Activated B cell treated with CpG ODN at 0.5 μM for 24 hours (primary cell): ENCODE measurements at regions of chr3 and their contacts with region 1.

Region 1: DNA sequence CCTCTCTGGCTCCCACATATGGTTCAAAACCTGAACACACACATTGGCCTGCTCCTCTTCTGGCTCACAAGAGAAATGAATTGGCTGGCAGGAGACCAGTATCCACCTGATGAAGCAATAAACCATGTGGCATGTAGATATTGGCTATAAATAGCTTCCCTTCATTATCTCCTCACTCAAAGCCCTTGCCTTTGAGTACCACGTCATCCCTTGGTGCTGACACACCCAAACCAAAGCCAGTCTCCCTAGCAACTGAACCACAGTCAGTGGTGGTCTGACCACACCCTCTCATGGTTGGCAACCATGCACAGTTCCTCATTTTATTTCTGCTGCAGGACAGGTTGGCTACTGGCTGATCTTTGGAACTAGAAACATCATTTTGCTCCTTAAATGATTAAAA is 98.8 kb downstream of the ZNF621 start:
- DNase-seq: peak; percentile 65
- ATAC-seq: peak; percentile 92
- H3K4me3 Mint-ChIP-seq: no peak overlapping the region
- H3K27ac Mint-ChIP-seq: no peak overlapping the region
- H3K4me1 Mint-ChIP-seq: peaks cover 13% of the 10 kb centered on the region
- H3K27me3 Mint-ChIP-seq: no peaks in the 10 kb centered on the region
- CTCF ChIP-seq: no peak

Region 2: GRCh38 chr3:40452876-40453730 is 170.5 kb before region 1 on chr3:
- CTCF ChIA-PET with region 1: no interaction called
- POLR2A ChIA-PET with region 1: no interaction called
- intact Hi-C with region 1: loop called (anchors 2 kb)
- DNase-seq: peak; percentile 81
- ATAC-seq: peak; percentile 92
- H3K4me3 Mint-ChIP-seq: peak overlapping the region; percentile 96
- H3K27ac Mint-ChIP-seq: peak overlapping the region; percentile 98
- H3K4me1 Mint-ChIP-seq: peaks cover 36% of the 10 kb centered on the region
- H3K27me3 Mint-ChIP-seq: no peaks in the 10 kb centered on the region
- CTCF ChIP-seq: no peak

Region 3: DNA sequence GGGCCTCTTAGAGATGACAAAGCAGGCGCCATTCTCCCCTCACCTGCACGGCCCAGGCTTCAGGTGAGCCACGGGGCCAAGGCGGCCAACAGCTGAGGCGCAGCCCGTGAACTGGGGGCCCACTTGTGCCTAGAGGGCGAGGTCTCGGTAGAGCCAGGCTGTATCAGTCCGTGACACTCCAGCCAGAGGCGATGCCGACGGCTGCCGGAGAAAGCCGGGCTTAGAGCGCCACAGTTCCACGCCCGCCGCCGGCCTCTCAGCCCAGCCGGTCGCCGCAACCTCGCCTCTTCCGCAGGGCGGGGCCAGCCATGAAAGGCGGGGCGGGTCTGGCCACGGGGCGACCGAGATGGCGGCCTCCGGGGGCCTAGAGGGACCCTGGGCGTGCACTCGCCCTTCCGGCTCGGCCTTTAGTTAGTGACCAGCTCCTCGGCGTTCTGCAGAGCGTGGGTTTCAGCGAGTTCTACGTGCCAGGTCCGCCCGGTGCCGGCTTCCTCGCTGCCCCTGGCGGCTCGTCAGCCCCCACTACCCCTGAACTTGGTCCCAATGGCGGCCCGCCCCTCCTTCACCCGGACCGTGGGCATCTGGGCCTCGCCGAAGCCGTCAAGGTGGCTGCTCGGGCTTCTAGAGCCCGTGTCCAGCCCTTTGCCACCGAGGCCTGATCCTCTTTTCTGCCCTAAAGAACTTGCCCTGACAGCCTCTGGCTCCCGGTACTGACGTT is 98.8 kb before region 1 on chr3 and contains the start of gene ZNF621:
- CTCF ChIA-PET with region 1: no interaction called
- POLR2A ChIA-PET with region 1: interaction called, 4 read pairs
- intact Hi-C with region 1: loop called (anchors 1 kb)
- DNase-seq: peak; percentile 88
- ATAC-seq: peak; percentile 99
- H3K4me3 Mint-ChIP-seq: peak within 1 kb of the TSS; percentile 93
- H3K27ac Mint-ChIP-seq: peak within 1 kb of the TSS; percentile 91
- H3K4me1 Mint-ChIP-seq: peaks cover 18% of the 10 kb centered on the region
- H3K27me3 Mint-ChIP-seq: no peaks in the 10 kb centered on the region
- CTCF ChIP-seq: no peak
- total RNA-seq, gene ZNF621: 20.2 and 25.8 TPM in 2 replicates

Region 4: DNA sequence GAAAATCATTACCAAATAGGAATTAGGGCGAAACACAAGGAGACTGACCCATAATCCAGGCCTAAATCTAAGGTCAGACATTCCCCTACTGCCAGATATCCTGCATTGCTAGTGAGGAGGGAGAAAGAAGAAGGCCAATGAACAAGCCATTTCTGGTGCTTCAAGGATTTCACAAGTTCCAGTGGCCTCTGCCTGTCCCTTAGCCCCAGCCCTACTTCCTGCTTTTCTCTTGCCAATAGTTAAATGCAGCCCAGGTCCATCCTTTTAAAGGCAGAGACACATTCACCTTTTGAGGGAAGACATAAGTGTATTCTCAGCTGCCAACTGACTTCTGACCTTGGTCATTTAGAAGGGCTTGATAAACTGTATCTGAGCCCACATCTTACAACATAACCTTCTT is 37.0 kb after region 1 on chr3:
- CTCF ChIA-PET with region 1: no interaction called
- POLR2A ChIA-PET with region 1: no interaction called
- intact Hi-C with region 1: loop called (anchors 5 kb)
- DNase-seq: no peak
- ATAC-seq: no peak
- H3K4me3 Mint-ChIP-seq: no peak overlapping the region
- H3K27ac Mint-ChIP-seq: no peak overlapping the region
- H3K4me1 Mint-ChIP-seq: peaks cover 16% of the 10 kb centered on the region
- H3K27me3 Mint-ChIP-seq: no peaks in the 10 kb centered on the region
- CTCF ChIP-seq: no peak

Region 5: DNA sequence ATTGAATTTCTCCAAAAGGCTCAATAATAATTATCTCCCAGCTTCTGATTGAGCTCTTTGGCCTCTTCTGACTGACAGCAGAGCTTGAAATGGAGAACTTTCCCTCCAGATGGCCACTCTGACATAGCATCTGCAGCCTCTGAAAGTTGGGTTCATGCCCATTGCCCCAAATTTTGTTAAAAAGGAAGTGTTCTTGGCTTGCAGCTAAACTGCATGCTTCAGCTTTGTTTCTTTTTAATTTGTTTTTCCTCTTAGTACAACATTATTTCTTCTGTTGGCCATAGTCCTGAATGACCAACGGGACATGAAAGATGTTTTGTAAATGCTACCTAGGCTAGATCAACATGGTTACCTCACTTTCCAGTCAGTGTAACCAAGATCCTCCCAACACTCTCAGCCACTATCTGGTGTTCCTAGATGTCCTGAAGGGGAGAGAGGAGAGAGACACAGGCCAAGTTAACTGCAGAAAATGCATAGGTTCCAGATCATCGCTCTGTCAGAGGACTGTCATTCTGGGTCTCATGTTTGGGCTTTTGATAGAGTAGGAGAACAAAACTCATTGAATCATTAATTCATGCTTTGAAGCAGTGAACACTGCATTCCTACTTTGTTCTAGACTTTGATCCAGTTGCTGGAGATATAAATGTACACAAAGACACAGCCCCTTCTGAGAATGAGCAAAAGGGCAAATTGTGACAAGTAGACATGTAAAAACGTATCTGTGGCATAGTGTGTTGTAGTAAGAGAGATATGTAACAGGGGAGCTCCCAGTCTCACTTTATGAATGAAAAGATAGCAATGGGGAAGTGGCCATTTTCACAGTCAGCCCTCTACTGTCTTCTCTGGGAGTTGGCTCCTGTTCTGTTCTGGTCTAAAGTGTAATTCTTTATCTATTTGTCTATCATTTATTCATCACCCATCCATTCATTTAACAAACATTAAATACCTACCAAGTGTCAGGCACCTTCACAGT is 57.4 kb after region 1 on chr3:
- CTCF ChIA-PET with region 1: no interaction called
- POLR2A ChIA-PET with region 1: no interaction called
- intact Hi-C with region 1: loop called (anchors 2 kb)
- DNase-seq: no peak
- ATAC-seq: peak; percentile 80
- H3K4me3 Mint-ChIP-seq: no peak overlapping the region
- H3K27ac Mint-ChIP-seq: peak overlapping the region; percentile 3
- H3K4me1 Mint-ChIP-seq: peaks cover 22% of the 10 kb centered on the region
- H3K27me3 Mint-ChIP-seq: no peaks in the 10 kb centered on the region
- CTCF ChIP-seq: no peak

Region 6: GRCh38 chr3:40719660-40720287 is 96.2 kb after region 1 on chr3:
- CTCF ChIA-PET with region 1: no interaction called
- POLR2A ChIA-PET with region 1: no interaction called
- intact Hi-C with region 1: loop called (anchors 2 kb)
- DNase-seq: no peak
- ATAC-seq: no peak
- H3K4me3 Mint-ChIP-seq: no peak overlapping the region
- H3K27ac Mint-ChIP-seq: peak overlapping the region; percentile 33
- H3K4me1 Mint-ChIP-seq: peaks cover 34% of the 10 kb centered on the region
- H3K27me3 Mint-ChIP-seq: no peaks in the 10 kb centered on the region
- CTCF ChIP-seq: no peak

Region 7: DNA sequence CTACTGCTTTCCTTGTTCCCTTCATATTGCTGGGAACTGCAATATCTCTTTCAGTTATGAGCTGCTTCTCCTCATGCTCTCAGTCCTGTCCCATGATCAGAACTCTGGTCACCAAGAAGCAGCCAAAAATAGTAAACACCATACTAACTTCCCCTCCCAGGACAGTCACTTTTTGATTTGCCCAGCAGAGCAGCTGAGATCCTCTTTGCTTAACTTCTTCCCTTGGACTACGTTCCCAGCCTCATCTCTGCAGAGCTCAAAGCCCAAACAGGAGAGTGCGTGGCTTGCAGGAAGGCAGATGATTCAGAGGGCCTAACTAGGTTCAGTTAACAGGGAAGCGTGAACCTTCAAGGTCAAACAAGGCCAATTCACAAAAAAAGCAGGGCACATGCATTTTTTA is 728.9 kb after region 1 on chr3:
- CTCF ChIA-PET with region 1: no interaction called
- POLR2A ChIA-PET with region 1: no interaction called
- intact Hi-C with region 1: no loop called
- DNase-seq: no peak
- ATAC-seq: no peak
- H3K4me3 Mint-ChIP-seq: no peak overlapping the region
- H3K27ac Mint-ChIP-seq: no peak overlapping the region
- H3K4me1 Mint-ChIP-seq: no peaks in the 10 kb centered on the region
- H3K27me3 Mint-ChIP-seq: no peaks in the 10 kb centered on the region
- CTCF ChIP-seq: no peak